OCI-LY7 (cell line): ENCODE measurements at regions of chr16 and their contacts with region 1.

Region 1: DNA sequence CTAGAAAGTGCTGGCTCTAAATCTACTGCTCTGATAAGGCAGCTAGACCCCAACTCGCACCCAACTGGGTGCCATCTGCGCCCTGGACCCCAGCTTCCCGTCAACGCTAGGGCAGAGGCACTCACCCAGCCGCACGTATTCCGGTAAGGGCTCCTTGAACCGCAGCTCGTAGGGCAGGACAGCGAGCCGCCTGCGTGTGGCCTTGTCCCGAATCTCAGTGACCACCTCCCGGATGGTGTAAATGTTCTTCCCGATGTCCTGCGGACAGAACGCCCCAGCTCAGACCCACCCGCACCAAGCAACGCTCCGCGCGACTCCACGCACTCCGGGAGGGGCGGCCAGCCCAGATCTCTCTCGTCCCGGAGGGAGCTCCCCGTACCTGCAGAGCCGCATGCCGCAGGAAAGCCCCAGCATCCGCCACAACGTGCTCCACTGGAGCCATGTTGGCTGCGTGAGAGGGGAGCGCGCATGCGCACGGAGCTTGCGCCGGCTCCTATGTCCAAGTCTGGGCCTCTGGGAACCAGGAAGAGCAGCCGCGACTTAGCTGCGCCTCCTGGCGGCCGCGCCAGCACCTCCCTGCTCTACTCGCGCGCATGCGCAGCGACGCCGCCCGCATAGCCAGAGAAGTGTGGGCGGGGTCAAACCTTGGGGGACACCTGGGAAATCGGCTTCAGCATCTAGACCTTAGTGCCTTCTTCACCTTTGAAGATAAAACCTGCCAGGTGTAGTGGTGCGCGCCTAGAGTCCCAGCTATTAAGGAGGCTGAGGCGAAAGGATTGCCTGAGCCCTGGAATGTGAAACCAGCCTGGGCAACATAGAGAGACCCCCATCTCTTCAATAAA is at the start of gene NOB1:
- DNase-seq: peak; percentile 98
- H3K4me3 ChIP-seq: peak within 1 kb of the TSS; percentile 88
- H3K27ac ChIP-seq: peak within 1 kb of the TSS; percentile 43
- H3K4me1 ChIP-seq: peaks cover 15% of the 10 kb centered on the region
- CTCF ChIP-seq: peak; percentile 91
- total RNA-seq, gene NOB1: 29.3 and 36.9 TPM in 2 replicates

Region 2: DNA sequence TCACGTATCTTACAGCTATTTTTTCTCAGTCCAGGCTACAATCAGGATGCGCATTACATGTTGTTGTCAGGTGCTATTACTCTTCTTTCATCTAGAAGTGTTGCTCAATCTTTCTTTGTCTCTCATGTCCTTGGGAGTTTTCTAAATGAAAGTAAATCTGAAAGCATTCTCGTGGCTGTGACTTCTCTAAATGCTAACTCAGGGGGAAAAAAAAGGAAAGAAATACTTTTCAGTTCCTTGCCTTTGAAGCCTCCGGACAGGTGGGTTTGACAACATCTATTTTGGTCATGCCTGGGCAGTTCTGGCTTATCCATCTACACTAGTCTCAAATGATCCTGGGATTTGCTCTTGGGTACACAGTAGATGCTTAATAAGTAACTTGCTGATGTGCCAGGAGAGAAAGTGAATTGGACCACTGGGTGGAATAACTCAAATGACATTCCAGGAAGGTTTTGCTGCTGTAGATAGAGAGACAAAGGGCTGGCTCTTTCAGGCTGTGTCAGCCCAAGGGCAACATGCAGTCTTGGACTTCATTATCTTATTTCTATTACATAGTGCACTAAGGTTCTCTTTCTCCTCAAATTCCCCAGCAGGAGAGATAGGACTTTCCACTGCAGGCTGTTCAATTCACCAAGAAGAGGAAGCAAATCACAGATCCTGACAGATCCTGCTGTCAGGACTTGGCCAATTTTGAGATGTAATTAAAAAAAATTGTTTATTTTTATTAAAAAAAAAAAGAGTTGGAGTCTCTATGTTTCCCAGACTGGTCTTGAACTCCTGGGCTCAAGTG is 252.5 kb before region 1 on chr16:
- CTCF ChIA-PET with region 1: no interaction called
- POLR2A ChIA-PET with region 1: no interaction called
- intact Hi-C with region 1: no loop called
- DNase-seq: peak; percentile 7
- H3K4me3 ChIP-seq: no peak overlapping the region
- H3K27ac ChIP-seq: no peak overlapping the region
- H3K4me1 ChIP-seq: no peaks in the 10 kb centered on the region
- CTCF ChIP-seq: no peak

Region 3: GRCh38 chr16:69709456-69710084 is 45.1 kb before region 1 on chr16:
- CTCF ChIA-PET with region 1: interaction called, 3 read pairs
- POLR2A ChIA-PET with region 1: interaction called, 7 read pairs
- intact Hi-C with region 1: loop called (anchors 2 kb)
- DNase-seq: peak; percentile 78
- H3K4me3 ChIP-seq: no peak overlapping the region
- H3K27ac ChIP-seq: no peak overlapping the region
- H3K4me1 ChIP-seq: no peaks in the 10 kb centered on the region
- CTCF ChIP-seq: peak; percentile 97

Region 4: GRCh38 chr16:69726296-69727060 is 28.2 kb before region 1 on chr16 and contains the start of gene NQO1:
- CTCF ChIA-PET with region 1: no interaction called
- POLR2A ChIA-PET with region 1: interaction called, 24 read pairs
- intact Hi-C with region 1: no loop called
- DNase-seq: peak; percentile 90
- H3K4me3 ChIP-seq: peak within 1 kb of the TSS; percentile 66
- H3K27ac ChIP-seq: peak within 1 kb of the TSS; percentile 59
- H3K4me1 ChIP-seq: peaks cover 32% of the 10 kb centered on the region
- CTCF ChIP-seq: no peak
- total RNA-seq, gene NQO1: 3.2 and 3.6 TPM in 2 replicates

Region 5: DNA sequence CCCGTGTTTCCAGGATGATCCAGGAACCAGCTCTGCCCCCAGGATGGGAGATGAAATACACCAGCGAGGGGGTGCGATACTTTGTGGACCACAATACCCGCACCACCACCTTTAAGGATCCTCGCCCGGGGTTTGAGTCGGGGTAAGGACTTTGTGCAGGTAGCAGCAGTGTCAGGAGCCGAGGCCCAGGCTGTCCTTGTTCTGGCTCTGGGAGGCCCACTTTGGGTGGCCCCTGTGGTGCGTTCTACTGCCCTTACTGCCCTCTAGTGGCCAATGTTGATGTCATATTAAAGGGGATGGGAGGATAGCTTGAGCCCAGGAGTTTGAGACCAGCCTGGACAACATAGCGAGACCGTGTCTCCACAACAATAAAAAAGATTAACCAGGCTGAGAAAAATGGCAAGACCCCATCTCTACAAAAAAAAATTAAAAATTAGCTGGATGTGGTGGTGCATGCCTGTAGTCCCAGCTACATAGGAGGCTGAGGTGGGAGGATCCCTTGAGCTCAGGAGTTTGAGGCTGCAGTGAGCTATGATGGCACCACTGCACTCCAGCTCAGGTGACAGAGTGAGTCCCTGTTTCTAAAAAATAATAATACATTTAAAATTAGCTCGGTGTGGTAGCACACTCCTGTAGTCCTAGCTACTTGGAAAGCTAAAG is 175.6 kb after region 1 on chr16:
- CTCF ChIA-PET with region 1: no interaction called
- POLR2A ChIA-PET with region 1: no interaction called
- intact Hi-C with region 1: no loop called
- DNase-seq: peak; percentile 68
- H3K4me3 ChIP-seq: no peak overlapping the region
- H3K27ac ChIP-seq: no peak overlapping the region
- H3K4me1 ChIP-seq: no peaks in the 10 kb centered on the region
- CTCF ChIP-seq: peak; percentile 88